CD4-positive, alpha-beta T cell (primary cell): ENCODE measurements at regions of chr16 and their contacts with region 1.

Region 1: DNA sequence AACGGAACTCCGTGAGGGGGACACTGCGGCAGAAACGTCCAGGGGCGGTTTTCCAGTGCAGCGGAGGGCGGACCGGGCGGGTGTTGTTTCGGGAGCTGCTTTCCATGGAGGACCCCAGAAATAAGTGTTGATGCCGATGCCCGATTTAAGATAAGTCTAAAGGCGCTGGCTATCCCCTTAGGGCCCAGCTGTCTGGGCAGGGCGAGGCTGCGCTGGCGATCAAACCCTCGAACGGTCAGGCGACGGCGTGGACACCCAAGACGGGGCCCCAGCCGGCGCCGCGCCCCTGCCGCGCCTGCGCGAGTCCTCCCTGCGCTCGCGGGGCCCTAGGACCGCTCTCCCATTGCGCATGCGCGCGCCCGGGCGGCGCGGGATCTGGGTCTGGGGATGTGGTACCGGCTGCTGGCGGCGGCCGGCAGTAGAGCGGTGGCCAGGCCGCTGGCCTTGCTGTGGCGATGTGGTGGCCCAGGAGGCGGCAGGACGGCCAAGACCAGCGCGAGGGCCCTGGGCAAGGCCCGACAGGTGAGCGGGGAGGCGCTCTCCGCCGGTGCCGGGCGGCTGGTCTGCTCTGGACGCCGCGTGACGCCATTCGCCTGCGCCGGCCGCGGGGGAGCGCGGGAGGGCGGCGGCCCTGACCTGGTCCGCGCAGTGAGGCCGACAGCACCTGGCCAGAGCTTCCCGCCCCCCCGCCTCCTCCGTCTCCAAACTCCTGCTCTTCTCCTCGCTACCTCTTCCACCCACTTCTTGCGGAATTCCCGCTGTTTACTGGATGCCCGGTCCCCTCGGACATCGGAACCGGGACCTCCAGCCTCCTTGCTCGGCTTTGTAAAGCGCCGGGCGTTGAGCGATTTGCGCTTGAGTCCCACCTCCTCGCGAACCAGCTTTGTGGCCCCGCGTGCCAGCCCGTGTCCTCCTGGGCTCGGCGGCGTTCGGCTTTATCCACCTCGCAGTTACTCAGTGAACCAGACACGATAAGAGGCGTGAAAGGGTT is 24.0 kb downstream of the DEF8 start:
- DNase-seq: peak; percentile 76 to 97 (median 91)
- ATAC-seq: peak; percentile 94
- H3K4me3 ChIP-seq: peak overlapping the region; percentile 96
- H3K4me3 Mint-ChIP-seq: peak overlapping the region; percentile 100
- H3K27ac ChIP-seq: peak overlapping the region; percentile 29 to 63
- H3K27ac Mint-ChIP-seq: peak overlapping the region; percentile 96
- H3K4me1 ChIP-seq: peaks cover 38% of the 10 kb centered on the region
- H3K4me1 Mint-ChIP-seq: peaks cover 35% of the 10 kb centered on the region
- H3K27me3 ChIP-seq: no peaks in the 10 kb centered on the region
- H3K27me3 Mint-ChIP-seq: no peaks in the 10 kb centered on the region
- CTCF ChIP-seq: no peak

Region 2: DNA sequence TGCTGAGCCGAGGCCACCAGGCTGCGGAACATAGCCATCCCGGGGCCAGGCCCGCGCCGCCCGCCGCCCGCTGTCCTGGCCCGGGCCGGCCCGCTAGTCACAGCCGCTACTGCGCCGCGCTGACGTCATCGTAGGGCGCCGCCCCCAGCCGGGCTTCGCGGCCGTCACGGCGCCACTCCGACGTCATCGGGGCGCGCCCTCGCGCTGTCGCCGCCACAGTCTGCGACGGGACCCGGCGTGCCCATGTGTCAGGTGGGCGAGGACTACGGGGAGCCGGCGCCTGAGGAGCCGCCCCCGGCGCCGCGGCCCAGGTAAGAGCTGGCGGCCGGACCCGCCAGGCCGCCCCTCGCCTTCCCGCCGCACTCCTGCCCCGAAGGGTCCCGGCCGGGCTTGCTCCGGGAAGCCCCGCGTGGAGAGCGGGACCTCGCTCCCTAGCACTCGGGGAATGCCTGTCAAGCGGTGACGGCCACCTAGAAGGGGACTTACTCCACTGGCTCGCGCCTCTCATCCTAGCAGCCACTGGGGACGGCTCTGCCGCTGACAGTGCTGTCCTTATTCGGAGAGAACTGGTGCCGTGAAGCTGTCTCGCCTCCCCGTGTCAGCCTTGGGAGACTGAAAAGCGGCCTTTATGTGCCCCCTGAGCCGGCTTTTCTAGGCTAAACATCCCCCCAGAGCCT is 1266.1 kb before region 1 on chr16 and contains the starts of genes CTU2 and RNF166:
- CTCF ChIA-PET with region 1: no interaction called
- POLR2A ChIA-PET with region 1: no interaction called
- intact Hi-C with region 1: loop called in 1 of 2 experiments (anchors 10 kb)
- DNase-seq: peak; percentile 81 to 98 (median 90)
- ATAC-seq: peak; percentile 62
- H3K4me3 ChIP-seq: peak within 1 kb of the TSS; percentile 88
- H3K4me3 Mint-ChIP-seq: peak within 1 kb of the TSS; percentile 99
- H3K27ac ChIP-seq: peak within 1 kb of the TSS; percentile 93 to 96
- H3K27ac Mint-ChIP-seq: peak within 1 kb of the TSS; percentile 100
- H3K4me1 ChIP-seq: peaks cover 56% of the 10 kb centered on the region
- H3K4me1 Mint-ChIP-seq: peaks cover 53% of the 10 kb centered on the region
- H3K27me3 ChIP-seq: no peaks in the 10 kb centered on the region
- H3K27me3 Mint-ChIP-seq: no peaks in the 10 kb centered on the region
- CTCF ChIP-seq: no peak
- total RNA-seq, gene CTU2: 39.3 to 44.0 TPM
- total RNA-seq, gene RNF166: 334 to 355 TPM

Region 3: DNA sequence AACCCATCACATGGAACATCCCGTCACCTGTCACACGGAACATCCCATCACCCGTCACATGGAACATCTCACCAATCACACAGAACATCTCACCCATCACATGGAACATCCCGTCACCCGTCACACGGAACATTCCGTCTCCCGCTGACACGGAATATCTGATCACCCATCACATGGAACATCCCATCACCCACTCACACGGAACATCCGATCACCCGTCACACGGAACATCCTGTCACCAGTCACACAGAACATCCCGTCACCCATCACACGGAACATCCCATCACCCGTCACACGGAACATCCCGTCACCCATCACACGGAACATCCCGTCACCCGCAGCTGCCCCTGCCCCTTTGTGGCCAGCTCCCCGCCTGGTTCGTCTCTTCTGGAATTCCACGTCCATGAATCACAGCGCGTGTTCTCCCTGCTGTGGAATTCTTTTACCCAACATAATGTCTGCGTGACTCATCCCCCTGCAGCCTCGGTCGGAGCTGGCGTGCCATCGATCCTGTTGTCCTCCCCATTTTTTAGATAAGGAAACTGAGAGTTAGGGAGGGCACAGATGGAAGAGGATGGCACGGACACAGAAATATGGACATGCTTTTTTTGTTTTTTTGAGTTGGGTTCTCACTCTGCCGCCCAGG is 391.4 kb before region 1 on chr16:
- CTCF ChIA-PET with region 1: no interaction called
- POLR2A ChIA-PET with region 1: no interaction called
- intact Hi-C with region 1: no loop called
- DNase-seq: no peak
- ATAC-seq: no peak
- H3K4me3 ChIP-seq: no peak overlapping the region
- H3K4me3 Mint-ChIP-seq: no peak overlapping the region
- H3K27ac ChIP-seq: no peak overlapping the region
- H3K27ac Mint-ChIP-seq: no peak overlapping the region
- H3K4me1 ChIP-seq: no peaks in the 10 kb centered on the region
- H3K4me1 Mint-ChIP-seq: no peaks in the 10 kb centered on the region
- H3K27me3 ChIP-seq: peaks cover 0 to 4% of the 10 kb centered on the region in 2 experiments
- H3K27me3 Mint-ChIP-seq: peaks cover 4% of the 10 kb centered on the region
- CTCF ChIP-seq: no peak

Region 4: DNA sequence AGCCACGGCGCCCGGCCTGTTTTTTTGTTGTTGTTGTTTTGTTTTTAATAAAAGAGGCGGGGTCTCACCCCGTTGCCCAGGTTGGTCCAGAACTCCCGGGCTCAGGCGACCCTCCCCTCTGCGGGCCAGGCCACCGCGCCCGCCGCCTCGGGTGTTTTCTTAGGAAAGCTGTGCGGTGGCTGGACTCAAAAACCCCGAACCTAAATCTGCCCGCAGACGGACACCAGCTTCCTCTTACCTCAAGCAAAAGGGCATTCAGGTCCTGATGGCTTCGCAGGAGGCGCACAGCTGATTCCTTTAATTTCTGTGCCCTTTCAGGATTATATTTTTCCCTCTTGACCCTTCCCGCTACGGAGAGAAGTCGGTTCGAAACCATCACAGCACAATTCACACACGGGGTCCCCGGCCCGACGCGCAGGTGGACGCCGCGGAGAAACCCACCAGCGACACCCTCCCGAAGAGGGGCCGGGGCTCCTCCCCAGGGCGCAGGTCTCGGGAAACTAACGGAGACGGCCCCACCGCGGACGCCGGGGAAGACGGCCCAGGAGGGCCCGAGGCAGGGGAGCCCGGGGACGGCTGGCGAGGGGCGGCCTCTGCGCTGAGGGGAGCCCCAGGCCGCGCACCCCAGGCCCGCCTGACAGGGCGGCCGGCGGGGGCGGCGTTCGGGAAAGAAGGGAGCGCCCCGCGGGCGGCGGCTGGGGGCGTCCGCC is 156.7 kb before region 1 on chr16:
- CTCF ChIA-PET with region 1: no interaction called
- POLR2A ChIA-PET with region 1: no interaction called
- intact Hi-C with region 1: loop called in 1 of 2 experiments (anchors 5 kb)
- DNase-seq: peak in 2 of 14 experiments; percentile 13 to 39
- ATAC-seq: peak; percentile 9
- H3K4me3 ChIP-seq: peak overlapping the region; percentile 64
- H3K4me3 Mint-ChIP-seq: peak overlapping the region; percentile 83
- H3K27ac ChIP-seq: no peak overlapping the region
- H3K27ac Mint-ChIP-seq: no peak overlapping the region
- H3K4me1 ChIP-seq: peaks cover 29% of the 10 kb centered on the region
- H3K4me1 Mint-ChIP-seq: peaks cover 29% of the 10 kb centered on the region
- H3K27me3 ChIP-seq: no peaks in the 10 kb centered on the region
- H3K27me3 Mint-ChIP-seq: no peaks in the 10 kb centered on the region
- CTCF ChIP-seq: no peak

Region 5: GRCh38 chr16:89945670-89946069 is 26.9 kb before region 1 on chr16:
- CTCF ChIA-PET with region 1: no interaction called
- POLR2A ChIA-PET with region 1: interaction called, 3 read pairs
- intact Hi-C with region 1: loop called in 1 of 2 experiments (anchors 1 kb)
- DNase-seq: no peak
- ATAC-seq: no peak
- H3K4me3 ChIP-seq: no peak overlapping the region
- H3K4me3 Mint-ChIP-seq: no peak overlapping the region
- H3K27ac ChIP-seq: no peak overlapping the region
- H3K27ac Mint-ChIP-seq: no peak overlapping the region
- H3K4me1 ChIP-seq: peaks cover 31% of the 10 kb centered on the region
- H3K4me1 Mint-ChIP-seq: peaks cover 3% of the 10 kb centered on the region
- H3K27me3 ChIP-seq: peaks cover 11 to 24% of the 10 kb centered on the region in 2 experiments
- H3K27me3 Mint-ChIP-seq: peaks cover 22% of the 10 kb centered on the region
- CTCF ChIP-seq: no peak

Region 6: DNA sequence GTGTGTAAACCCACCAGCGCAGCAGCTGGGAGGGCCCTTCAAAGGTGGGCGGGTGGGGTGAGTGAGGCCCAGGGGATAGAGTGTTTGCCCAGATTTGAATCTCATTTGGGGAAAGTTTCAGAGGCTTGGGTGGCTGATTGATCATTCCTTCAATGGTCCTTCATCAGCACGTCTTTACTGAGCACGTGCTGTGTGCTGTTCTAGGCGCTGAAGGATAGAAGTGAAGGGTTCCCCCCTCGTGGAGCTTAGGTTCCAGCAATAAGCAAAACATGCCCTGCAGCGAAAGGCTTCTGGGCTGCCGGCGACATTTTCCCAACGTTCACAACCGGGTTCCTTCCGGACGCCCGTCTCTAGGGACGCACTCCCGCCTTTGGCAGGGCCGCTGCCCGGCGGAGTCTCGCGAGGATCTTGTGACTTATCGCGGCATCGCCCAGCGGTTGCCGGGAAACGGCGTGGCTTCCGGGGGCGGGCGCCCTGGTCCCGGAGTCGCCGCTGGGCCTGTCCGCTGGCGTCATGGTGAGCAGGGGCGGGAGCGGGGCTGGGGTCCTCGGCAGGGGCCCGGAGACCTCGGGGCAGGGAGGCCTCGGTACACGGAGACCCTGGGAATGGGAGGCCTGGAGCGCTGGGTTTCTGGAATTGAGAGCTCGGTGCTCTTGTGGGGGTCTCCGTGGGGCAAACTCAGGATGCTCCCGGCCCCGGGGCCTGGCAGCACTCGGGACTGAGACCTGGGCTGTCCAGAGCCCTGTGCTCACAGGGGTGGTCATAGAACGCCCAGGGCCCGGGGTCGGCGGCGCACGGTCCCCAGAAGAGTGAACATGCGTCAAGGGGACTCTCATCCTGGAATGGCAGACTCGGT is 49.9 kb after region 1 on chr16:
- CTCF ChIA-PET with region 1: interaction called, 3 read pairs
- POLR2A ChIA-PET with region 1: no interaction called
- intact Hi-C with region 1: loop called in 1 of 2 experiments (anchors 2 kb)
- DNase-seq: peak; percentile 53 to 88 (median 71)
- ATAC-seq: peak; percentile 66
- H3K4me3 ChIP-seq: peak overlapping the region; percentile 57
- H3K4me3 Mint-ChIP-seq: peak overlapping the region; percentile 55
- H3K27ac ChIP-seq: no peak overlapping the region
- H3K27ac Mint-ChIP-seq: peak overlapping the region; percentile 30
- H3K4me1 ChIP-seq: peaks cover 54% of the 10 kb centered on the region
- H3K4me1 Mint-ChIP-seq: peaks cover 20% of the 10 kb centered on the region
- H3K27me3 ChIP-seq: peaks cover 0 to 5% of the 10 kb centered on the region in 2 experiments
- H3K27me3 Mint-ChIP-seq: no peaks in the 10 kb centered on the region
- CTCF ChIP-seq: no peak